ENCODE measurements at regions of chr2 and their contacts with region 1.

Region 1: GRCh38 chr2:9018534-9018933 is 15.1 kb upstream of the MBOAT2 start:
- DNase-seq: no peak
- H3K27ac ChIP-seq: no peak overlapping the region
- CTCF ChIP-seq: no peak

Region 2: DNA sequence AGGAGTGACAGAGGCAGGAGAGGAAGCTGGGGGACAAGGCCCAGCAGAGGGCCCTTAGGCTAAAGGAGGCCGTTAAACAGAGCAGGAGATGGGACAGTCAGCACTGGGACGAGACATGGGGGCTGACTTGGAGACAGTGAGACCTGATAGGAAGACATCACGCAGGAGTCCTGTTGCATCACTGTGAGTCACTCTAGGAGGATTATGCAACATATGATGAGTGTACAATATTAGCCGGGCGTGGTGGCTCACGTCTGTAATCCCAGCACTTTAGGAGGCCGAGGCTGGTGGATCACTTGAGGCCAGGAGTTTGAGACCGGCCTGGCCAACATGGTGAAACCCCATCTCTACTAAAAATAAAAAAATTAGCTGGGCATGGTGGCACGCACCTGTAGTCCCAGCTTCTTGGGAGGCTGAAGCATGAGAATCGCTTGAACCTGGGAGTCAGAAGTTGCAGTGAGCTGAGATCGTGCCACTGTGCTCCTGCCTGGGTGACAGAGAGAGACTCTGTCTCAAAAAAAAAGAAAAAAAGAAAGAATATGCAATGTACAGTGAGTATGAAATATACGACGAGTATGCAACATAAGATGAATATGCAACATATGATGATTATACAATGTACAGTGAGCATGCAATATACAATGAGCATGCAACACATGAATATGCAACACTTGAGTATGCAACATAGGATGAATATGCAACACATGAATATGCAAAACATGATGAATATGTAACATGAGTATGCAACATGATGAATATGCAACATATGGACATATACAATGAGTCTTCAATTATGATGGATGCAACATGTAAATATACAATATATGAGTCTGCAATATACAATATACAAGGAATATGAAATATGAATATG is 420.0 kb before region 1 on chr2:
- CTCF ChIA-PET with region 1: no interaction called
- POLR2A ChIA-PET with region 1: no interaction called
- DNase-seq: peak; percentile 82
- H3K27ac ChIP-seq: peak overlapping the region; percentile 46
- CTCF ChIP-seq: no peak

Region 3: DNA sequence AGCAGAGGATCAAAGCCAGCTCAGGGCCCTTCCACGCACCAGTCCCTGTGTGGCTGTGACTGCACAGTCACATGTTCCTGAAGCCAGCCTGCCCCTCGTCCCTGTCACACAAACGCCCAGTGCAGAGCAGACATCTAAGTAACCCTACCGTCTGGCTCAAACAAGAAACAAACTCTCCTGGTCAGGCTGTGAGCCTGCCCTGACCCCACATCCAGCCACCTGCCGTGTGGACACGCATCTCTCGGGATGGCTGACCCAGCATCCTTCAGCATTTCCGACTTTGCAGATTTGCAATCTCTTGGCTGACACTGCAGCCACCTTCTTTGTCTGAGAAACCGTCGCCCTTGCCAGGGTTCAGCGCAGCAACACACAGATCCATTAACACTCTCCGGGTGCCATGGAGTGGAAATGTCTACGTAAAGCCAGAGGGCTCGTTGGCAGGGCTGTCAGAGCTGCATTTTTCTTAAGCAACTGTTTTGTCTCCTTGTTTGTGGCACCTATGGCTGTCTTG is 105.8 kb after region 1 on chr2:
- CTCF ChIA-PET with region 1: no interaction called
- POLR2A ChIA-PET with region 1: interaction called, 13 read pairs
- DNase-seq: no peak
- H3K27ac ChIP-seq: no peak overlapping the region
- CTCF ChIP-seq: no peak

Measured in RWPE1 (cell line).